Endothelial cell of umbilical vein (primary cell): ENCODE measurements at regions of chr9 and their contacts with region 1.

Region 1: GRCh38 chr9:83334320-83334719 is 203.9 kb downstream of the FRMD3 start:
- DNase-seq: peak; percentile 74
- H3K4me3 ChIP-seq: no peak overlapping the region
- H3K27ac ChIP-seq: no peak overlapping the region
- H3K4me1 ChIP-seq: peaks cover 3% of the 10 kb centered on the region
- H3K27me3 ChIP-seq: no peaks in the 10 kb centered on the region
- CTCF ChIP-seq: peak; percentile 79 to 90
- POLR2A ChIP-seq: no peak

Region 2: DNA sequence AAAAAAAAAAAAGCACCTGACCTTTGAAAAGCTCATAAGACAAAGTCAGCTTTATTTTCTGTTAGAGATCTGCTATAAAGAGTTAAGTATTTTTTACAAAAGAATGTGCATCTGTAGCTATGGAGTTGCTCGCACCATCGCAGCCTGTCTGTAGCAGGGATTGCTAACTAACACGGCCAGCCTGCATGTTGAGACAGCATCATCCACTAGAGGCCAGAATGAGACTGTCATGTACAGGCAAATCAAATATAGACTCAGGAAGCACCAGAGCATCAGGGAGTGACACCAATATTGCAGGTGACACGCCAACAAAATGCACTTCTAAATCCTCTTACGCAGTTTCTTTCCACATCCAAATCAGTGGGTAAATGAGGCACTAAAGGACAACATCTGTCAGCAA is 135.1 kb before region 1 on chr9:
- CTCF ChIA-PET with region 1: interaction called, 9 read pairs
- POLR2A ChIA-PET with region 1: no interaction called
- dilution Hi-C with region 1: no loop called
- intact Hi-C with region 1: loop called (anchors 1 kb)
- DNase-seq: peak; percentile 65
- H3K4me3 ChIP-seq: no peak overlapping the region
- H3K27ac ChIP-seq: no peak overlapping the region
- H3K4me1 ChIP-seq: no peaks in the 10 kb centered on the region
- H3K27me3 ChIP-seq: peaks cover 11 to 17% of the 10 kb centered on the region in 2 experiments
- CTCF ChIP-seq: peak; percentile 54 to 70
- POLR2A ChIP-seq: no peak

Region 3: GRCh38 chr9:83281306-83282255 is 52.7 kb before region 1 on chr9:
- CTCF ChIA-PET with region 1: interaction called, 25 read pairs
- POLR2A ChIA-PET with region 1: no interaction called
- dilution Hi-C with region 1: no loop called
- intact Hi-C with region 1: no loop called
- DNase-seq: peak; percentile 82
- H3K4me3 ChIP-seq: peak overlapping the region in 1 of 3 experiments; percentile 14
- H3K27ac ChIP-seq: peak overlapping the region; percentile 77
- H3K4me1 ChIP-seq: peaks cover 25% of the 10 kb centered on the region
- H3K27me3 ChIP-seq: no peaks in the 10 kb centered on the region
- CTCF ChIP-seq: no peak
- POLR2A ChIP-seq: no peak

Region 4: GRCh38 chr9:83317244-83317643 is 17.1 kb before region 1 on chr9:
- CTCF ChIA-PET with region 1: interaction called, 11 read pairs
- POLR2A ChIA-PET with region 1: no interaction called
- dilution Hi-C with region 1: no loop called
- intact Hi-C with region 1: no loop called
- DNase-seq: no peak
- H3K4me3 ChIP-seq: no peak overlapping the region
- H3K27ac ChIP-seq: no peak overlapping the region
- H3K4me1 ChIP-seq: no peaks in the 10 kb centered on the region
- H3K27me3 ChIP-seq: no peaks in the 10 kb centered on the region
- CTCF ChIP-seq: no peak
- POLR2A ChIP-seq: no peak

Region 5: DNA sequence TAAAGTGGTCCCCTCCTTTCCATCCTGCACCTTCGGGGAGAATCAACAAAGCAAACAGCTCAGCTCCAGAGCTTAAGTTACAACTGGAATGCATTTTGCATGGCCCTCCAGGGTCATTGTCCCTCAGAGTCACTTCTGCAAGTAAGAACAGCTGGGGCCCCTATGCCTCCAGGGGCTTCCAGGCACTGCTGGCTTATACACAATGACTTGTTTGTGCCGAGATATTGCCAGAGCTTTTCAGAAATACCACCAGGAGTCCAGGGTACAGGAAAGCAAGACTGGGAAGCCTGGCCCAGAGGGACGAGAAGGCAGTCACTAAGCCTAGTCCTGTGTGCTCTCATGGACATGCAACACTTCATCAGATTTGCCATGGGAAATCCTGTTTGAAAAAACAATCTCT is 192.6 kb after region 1 on chr9:
- CTCF ChIA-PET with region 1: interaction called, 11 read pairs
- POLR2A ChIA-PET with region 1: no interaction called
- dilution Hi-C with region 1: no loop called
- intact Hi-C with region 1: no loop called
- DNase-seq: no peak
- H3K4me3 ChIP-seq: no peak overlapping the region
- H3K27ac ChIP-seq: no peak overlapping the region
- H3K4me1 ChIP-seq: no peaks in the 10 kb centered on the region
- H3K27me3 ChIP-seq: peaks cover 0 to 2% of the 10 kb centered on the region in 2 experiments
- CTCF ChIP-seq: no peak
- POLR2A ChIP-seq: no peak

Region 6: DNA sequence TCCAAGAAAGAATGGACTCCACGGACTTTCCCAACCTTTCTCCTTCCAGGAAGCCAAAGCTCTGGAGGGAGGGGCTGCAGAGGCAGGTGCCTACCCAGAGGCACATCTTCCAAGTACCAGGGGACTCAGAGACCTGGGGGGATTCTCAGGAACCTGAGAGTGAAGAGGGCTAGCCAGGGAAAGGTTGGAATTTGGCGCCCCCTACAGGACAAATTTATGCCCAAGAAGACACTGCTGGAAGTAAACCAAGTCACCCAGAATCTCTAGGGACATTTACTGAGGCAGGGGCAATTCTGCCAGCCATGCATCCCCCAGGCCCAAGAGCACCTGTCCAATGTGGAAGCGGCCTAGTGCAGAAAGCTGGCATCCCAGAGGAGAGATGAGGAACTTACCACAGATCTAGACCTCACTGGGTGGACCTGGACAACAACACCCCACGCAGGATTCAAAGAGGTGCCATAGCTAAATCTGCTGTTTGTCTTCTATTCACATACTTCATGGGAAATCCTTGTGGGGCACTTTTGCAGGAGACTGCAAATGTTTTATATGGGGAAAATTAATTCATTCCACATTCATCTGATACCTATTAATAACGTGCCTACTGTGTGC is 262.7 kb after region 1 on chr9:
- CTCF ChIA-PET with region 1: interaction called, 11 read pairs
- POLR2A ChIA-PET with region 1: no interaction called
- dilution Hi-C with region 1: no loop called
- intact Hi-C with region 1: loop called (anchors 1 kb)
- DNase-seq: peak; percentile 31
- H3K4me3 ChIP-seq: no peak overlapping the region
- H3K27ac ChIP-seq: no peak overlapping the region
- H3K4me1 ChIP-seq: no peaks in the 10 kb centered on the region
- H3K27me3 ChIP-seq: no peaks in the 10 kb centered on the region
- CTCF ChIP-seq: peak; percentile 70 to 72
- POLR2A ChIP-seq: no peak